CD8-positive, alpha-beta T cell (primary cell): ENCODE measurements at regions of chr7 and their contacts with region 1.

Region 1: DNA sequence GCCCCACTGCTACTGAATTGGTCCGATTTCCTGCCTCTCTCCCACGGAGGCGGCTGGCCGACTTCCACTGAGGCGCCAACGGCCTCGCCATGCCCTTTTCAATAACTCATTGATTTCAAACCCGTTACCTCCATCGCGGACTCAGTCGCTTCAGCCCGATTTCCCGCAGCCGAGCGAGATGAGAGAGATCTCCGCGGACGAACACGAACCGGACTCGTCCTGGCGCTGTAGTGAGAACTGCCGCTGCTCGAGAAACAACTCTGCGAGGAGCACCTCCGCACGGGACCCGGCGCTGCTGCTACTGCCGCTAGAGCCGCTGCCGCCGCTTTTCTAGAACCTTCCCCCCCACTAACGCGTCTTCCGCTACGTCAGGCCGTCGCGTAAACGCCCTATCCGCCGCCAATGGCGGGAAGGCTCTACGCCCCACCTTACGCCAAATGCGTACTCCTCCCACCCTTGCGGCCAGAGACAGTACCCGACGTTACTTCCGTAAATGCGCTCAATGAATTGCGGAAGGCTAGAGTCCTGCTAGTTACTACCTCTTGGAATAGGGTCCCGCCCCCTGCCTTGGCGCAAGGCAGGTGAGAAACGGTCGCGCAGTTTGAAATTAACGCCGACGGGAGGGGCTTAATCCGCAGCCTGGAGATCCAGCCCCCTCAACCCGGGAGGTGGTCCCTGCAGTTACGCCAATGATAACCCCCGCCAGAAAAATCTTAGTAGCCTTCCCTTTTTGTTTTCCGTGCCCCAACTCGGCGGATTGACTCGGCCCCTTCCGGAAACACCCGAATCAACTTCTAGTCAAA is at the start of gene HNRNPA2B1:
- DNase-seq: peak; percentile 96 to 100 (median 98)
- ATAC-seq: peak; percentile 75
- H3K4me3 ChIP-seq: peak within 1 kb of the TSS; percentile 75 to 95
- H3K4me3 Mint-ChIP-seq: peak within 1 kb of the TSS; percentile 100
- H3K27ac ChIP-seq: peak within 1 kb of the TSS; percentile 92 to 95
- H3K27ac Mint-ChIP-seq: peak within 1 kb of the TSS; percentile 99
- H3K4me1 ChIP-seq: peaks cover 49% of the 10 kb centered on the region
- H3K4me1 Mint-ChIP-seq: peaks cover 51% of the 10 kb centered on the region
- H3K27me3 ChIP-seq: no peaks in the 10 kb centered on the region
- H3K27me3 Mint-ChIP-seq: no peaks in the 10 kb centered on the region
- CTCF ChIP-seq: no peak
- total RNA-seq, gene HNRNPA2B1: 241 to 247 TPM

Region 2: DNA sequence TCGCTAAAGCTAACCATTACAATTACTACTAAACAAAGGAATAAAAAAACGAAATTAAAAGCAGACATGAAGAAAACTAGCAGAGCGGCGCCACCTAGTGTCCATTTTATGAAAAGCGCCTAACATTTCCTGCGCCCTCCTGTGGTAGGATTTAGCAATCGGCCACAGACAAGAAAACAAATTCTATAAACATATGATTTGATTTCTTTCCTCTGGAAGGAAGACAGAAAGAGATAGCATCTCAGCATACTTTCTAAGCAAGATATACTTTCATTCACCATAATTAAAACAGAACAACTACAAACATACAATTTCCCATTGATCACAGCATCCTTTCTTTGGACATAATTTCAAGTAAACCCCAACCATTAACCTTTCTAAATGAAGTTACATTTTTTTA is 634.7 kb before region 1 on chr7:
- CTCF ChIA-PET with region 1: no interaction called
- POLR2A ChIA-PET with region 1: no interaction called
- intact Hi-C with region 1: no loop called
- DNase-seq: peak; percentile 44 to 79 (median 62)
- ATAC-seq: peak; percentile 68
- H3K4me3 ChIP-seq: no peak overlapping the region
- H3K4me3 Mint-ChIP-seq: no peak overlapping the region
- H3K27ac ChIP-seq: no peak overlapping the region
- H3K27ac Mint-ChIP-seq: no peak overlapping the region
- H3K4me1 ChIP-seq: no peaks in the 10 kb centered on the region
- H3K4me1 Mint-ChIP-seq: peaks cover 4% of the 10 kb centered on the region
- H3K27me3 ChIP-seq: no peaks in the 10 kb centered on the region
- H3K27me3 Mint-ChIP-seq: no peaks in the 10 kb centered on the region
- CTCF ChIP-seq: peak; percentile 100

Region 3: DNA sequence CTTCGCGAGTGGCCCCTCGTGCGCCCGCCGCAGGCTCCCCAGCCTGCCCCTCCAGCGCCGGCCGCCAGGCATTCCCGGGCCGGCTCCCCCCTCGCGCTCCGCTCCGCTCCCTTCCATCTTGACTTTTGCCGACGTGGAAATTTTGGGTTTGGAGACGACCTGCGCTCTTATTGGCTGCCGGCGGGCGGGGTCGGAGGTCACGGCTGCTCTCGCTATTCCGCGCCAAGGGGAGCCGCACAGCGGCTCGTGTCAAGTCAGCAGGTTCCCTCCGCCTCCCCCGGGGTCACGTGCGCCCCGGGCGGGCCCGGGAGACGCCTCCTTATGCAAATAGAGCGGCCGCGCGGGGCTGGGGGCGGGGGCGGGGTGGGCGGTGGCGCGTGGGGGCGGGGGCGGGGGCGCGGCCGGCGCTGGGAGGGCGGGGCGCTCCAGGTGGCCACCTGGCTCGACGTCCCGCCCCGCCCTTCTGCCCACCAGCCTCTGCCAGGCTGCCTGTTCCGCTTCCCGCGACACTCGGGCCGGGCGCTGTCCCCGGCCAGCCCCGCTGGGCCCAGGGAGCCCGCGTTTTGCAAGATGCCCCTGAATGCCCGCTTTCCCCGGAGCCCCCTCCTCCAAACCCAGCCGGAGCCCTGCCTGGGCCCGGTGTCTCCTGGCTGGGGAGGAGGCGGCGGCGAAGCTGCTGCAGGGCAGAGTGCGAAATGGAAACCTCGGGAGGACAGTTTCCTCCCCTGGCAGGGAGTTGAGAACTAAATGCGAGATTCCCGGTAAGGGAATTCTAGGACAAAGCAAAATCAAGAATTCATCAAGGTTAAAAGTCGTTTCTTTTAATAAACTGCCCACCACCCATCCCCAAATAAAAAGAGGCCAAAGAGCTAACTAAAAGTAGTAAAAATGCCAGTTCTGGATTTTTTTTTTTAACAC is 249.4 kb before region 1 on chr7:
- CTCF ChIA-PET with region 1: interaction called, 3 read pairs
- POLR2A ChIA-PET with region 1: no interaction called
- intact Hi-C with region 1: loop called (anchors 5 kb)
- DNase-seq: peak; percentile 70 to 93 (median 87)
- ATAC-seq: peak; percentile 97
- H3K4me3 ChIP-seq: peak overlapping the region; percentile 54 to 65
- H3K4me3 Mint-ChIP-seq: peak overlapping the region; percentile 90
- H3K27ac ChIP-seq: peak overlapping the region in 1 of 2 experiments; percentile 27
- H3K27ac Mint-ChIP-seq: peak overlapping the region; percentile 76
- H3K4me1 ChIP-seq: peaks cover 18% of the 10 kb centered on the region
- H3K4me1 Mint-ChIP-seq: peaks cover 22% of the 10 kb centered on the region
- H3K27me3 ChIP-seq: no peaks in the 10 kb centered on the region
- H3K27me3 Mint-ChIP-seq: peaks cover 2% of the 10 kb centered on the region
- CTCF ChIP-seq: no peak

Region 4: GRCh38 chr7:26151953-26152781 is 48.5 kb before region 1 on chr7 and contains the start of gene NFE2L3:
- CTCF ChIA-PET with region 1: interaction called, 28 read pairs
- POLR2A ChIA-PET with region 1: interaction called, 94 read pairs
- intact Hi-C with region 1: loop called in 1 of 2 experiments (anchors 1 kb)
- DNase-seq: peak; percentile 64 to 90 (median 77)
- ATAC-seq: peak; percentile 81
- H3K4me3 ChIP-seq: peak within 1 kb of the TSS; percentile 70 to 91
- H3K4me3 Mint-ChIP-seq: peak within 1 kb of the TSS; percentile 87
- H3K27ac ChIP-seq: peak within 1 kb of the TSS in 1 of 2 experiments; percentile 75
- H3K27ac Mint-ChIP-seq: peak within 1 kb of the TSS; percentile 73
- H3K4me1 ChIP-seq: peaks cover 39% of the 10 kb centered on the region
- H3K4me1 Mint-ChIP-seq: peaks cover 50% of the 10 kb centered on the region
- H3K27me3 ChIP-seq: no peaks in the 10 kb centered on the region
- H3K27me3 Mint-ChIP-seq: no peaks in the 10 kb centered on the region
- CTCF ChIP-seq: no peak
- total RNA-seq, gene NFE2L3: 0.43 to 0.50 TPM

Region 5: DNA sequence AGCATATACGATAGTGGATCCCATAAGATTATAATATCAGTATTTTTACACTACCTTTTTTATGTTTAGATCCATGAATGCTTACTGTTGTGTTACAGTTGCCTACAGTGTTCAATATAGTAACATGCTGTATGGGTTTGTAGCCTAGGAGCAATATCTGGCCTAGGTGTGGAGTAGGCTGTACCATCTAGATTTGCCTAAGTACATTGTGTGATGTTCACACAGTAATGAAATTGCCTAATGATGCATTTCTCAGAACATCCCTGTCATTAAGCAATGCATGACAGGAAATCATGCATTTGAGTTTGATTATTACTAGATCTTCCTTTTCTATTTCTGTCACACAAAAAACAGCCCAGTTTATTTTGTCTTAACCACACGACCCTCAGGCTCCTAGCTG is 15.4 kb after region 1 on chr7:
- CTCF ChIA-PET with region 1: interaction called, 3 read pairs
- POLR2A ChIA-PET with region 1: interaction called, 7 read pairs
- intact Hi-C with region 1: loop called in 1 of 2 experiments (anchors 1 kb)
- DNase-seq: no peak
- ATAC-seq: no peak
- H3K4me3 ChIP-seq: no peak overlapping the region
- H3K4me3 Mint-ChIP-seq: no peak overlapping the region
- H3K27ac ChIP-seq: no peak overlapping the region
- H3K27ac Mint-ChIP-seq: no peak overlapping the region
- H3K4me1 ChIP-seq: no peaks in the 10 kb centered on the region
- H3K4me1 Mint-ChIP-seq: peaks cover 15% of the 10 kb centered on the region
- H3K27me3 ChIP-seq: no peaks in the 10 kb centered on the region
- H3K27me3 Mint-ChIP-seq: peaks cover under 1% of the 10 kb centered on the region
- CTCF ChIP-seq: no peak

Region 6: GRCh38 chr7:27160546-27161213 is 960.0 kb after region 1 on chr7:
- CTCF ChIA-PET with region 1: no interaction called
- POLR2A ChIA-PET with region 1: no interaction called
- intact Hi-C with region 1: loop called (anchors 5 to 10 kb)
- DNase-seq: peak; percentile 70 to 93 (median 87)
- ATAC-seq: peak; percentile 87
- H3K4me3 ChIP-seq: peak overlapping the region; percentile 63 to 79
- H3K4me3 Mint-ChIP-seq: peak overlapping the region; percentile 80
- H3K27ac ChIP-seq: no peak overlapping the region
- H3K27ac Mint-ChIP-seq: no peak overlapping the region
- H3K4me1 ChIP-seq: peaks cover 31% of the 10 kb centered on the region
- H3K4me1 Mint-ChIP-seq: peaks cover 41% of the 10 kb centered on the region
- H3K27me3 ChIP-seq: peaks cover 52 to 70% of the 10 kb centered on the region in 2 experiments
- H3K27me3 Mint-ChIP-seq: peaks cover 77% of the 10 kb centered on the region
- CTCF ChIP-seq: peak; percentile 97